ENCODE measurements at regions of chr17 and their contacts with region 1.

Region 1: GRCh38 chr17:47970704-47971463 is at the start of gene CDK5RAP3:
- DNase-seq: peak; percentile 97 to 98 (median 98)
- H3K4me3 ChIP-seq: peak within 1 kb of the TSS; percentile 74
- H3K4me3 Mint-ChIP-seq: peak within 1 kb of the TSS; percentile 98 to 100 (median 99)
- H3K27ac ChIP-seq: peak within 1 kb of the TSS; percentile 73
- H3K27ac Mint-ChIP-seq: peak within 1 kb of the TSS; percentile 90 to 99 (median 94)
- H3K4me1 ChIP-seq: peaks cover 14% of the 10 kb centered on the region
- H3K4me1 Mint-ChIP-seq: peaks cover 26 to 37% (median 33%) of the 10 kb centered on the region in 3 donors
- H3K27me3 ChIP-seq: no peaks in the 10 kb centered on the region
- H3K27me3 Mint-ChIP-seq: peaks cover 0 to 1% of the 10 kb centered on the region in 2 donors
- total RNA-seq, gene CDK5RAP3: 178 to 184 TPM

Region 2: DNA sequence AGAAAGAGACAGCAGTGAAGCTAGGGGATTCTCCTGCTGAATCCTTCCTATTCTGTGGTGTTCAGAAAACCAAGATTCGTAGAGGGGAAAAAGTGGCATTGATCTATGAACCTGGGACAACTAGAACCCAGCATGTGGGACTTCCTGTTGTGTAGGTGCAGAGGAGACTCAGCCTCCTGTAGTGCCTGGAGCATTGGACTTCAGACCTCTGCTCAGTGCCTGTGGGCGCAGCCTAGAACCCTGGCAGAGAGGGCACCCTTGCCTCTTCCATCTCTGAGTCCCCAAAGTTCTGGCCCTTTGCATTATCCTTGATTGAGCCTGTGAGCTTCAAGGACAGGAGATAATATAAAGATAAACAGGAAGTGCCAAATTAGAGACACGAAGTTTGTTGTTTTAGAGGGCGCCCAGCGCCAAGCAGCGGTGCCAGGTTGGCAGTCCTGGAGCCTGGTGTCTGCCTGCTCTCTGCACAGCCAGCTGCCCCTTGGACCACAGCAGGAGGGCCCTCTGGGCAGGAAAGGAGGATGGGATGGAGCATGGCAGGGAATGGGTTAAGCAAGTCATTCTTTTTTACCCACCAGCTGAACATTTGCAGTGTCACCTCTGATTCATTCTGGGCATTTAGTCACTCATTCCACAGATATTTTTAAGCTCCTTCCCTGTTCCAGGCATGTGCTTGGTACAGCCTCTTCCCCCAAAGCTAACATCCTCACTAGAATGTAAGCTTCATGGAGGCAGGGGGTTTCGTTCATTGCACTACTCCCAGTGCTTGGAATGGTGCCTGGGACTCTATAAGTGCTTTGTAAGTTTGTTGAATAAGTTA is 108.1 kb before region 1 on chr17:
- CTCF ChIA-PET with region 1: no interaction called
- POLR2A ChIA-PET with region 1: no interaction called
- DNase-seq: no peak
- H3K4me3 ChIP-seq: no peak overlapping the region
- H3K4me3 Mint-ChIP-seq: no peak overlapping the region
- H3K27ac ChIP-seq: no peak overlapping the region
- H3K27ac Mint-ChIP-seq: no peak overlapping the region
- H3K4me1 ChIP-seq: peaks cover 17% of the 10 kb centered on the region
- H3K4me1 Mint-ChIP-seq: peaks cover 0 to 3% (median 0%) of the 10 kb centered on the region in 3 donors
- H3K27me3 ChIP-seq: no peaks in the 10 kb centered on the region
- H3K27me3 Mint-ChIP-seq: peaks cover 11 to 33% of the 10 kb centered on the region in 2 donors

Region 3: DNA sequence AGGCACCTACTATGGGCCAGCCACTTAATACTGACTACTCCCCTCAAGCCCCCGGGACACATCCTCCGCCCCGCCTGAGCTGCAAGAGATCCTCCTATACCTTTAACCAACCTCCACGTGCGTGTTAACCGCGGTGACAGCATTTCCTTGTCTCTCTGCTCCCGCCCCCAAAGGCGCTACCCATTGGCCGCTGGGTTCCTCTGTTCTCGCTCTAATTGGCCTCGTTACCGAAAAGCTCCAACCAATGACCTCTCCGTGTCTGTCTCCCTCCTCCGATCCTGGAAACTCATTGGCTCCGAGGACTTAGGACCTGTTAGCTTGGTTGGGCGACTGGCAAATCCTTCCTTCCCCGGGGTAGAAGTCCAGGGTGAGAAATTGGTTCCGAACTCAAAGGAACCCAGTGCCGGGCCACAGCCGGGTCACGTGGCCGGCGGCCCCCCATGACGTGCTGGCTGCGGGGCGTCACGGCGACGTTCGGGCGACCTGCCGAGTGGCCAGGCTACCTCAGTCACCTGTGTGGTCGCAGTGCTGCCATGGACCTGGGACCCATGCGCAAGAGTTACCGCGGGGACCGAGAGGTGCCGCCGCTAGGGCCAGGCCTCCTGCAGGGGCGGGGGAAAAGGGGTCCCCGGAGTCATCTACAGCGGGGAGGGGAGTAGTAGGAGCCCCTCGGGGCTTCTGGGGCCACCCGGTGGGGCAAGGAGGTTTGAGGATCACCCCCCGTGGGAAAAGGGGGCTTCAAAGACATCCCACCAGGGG is 29.5 kb before region 1 on chr17 and contains the start of gene PNPO:
- CTCF ChIA-PET with region 1: interaction called, 191 read pairs
- POLR2A ChIA-PET with region 1: interaction called, 14 read pairs
- DNase-seq: peak; percentile 88 to 96 (median 93)
- H3K4me3 ChIP-seq: peak within 1 kb of the TSS; percentile 88
- H3K4me3 Mint-ChIP-seq: peak within 1 kb of the TSS; percentile 59 to 91 (median 86)
- H3K27ac ChIP-seq: peak within 1 kb of the TSS; percentile 81
- H3K27ac Mint-ChIP-seq: peak within 1 kb of the TSS; percentile 53 to 96 (median 92)
- H3K4me1 ChIP-seq: peaks cover 43% of the 10 kb centered on the region
- H3K4me1 Mint-ChIP-seq: peaks cover 33 to 57% (median 49%) of the 10 kb centered on the region in 3 donors
- H3K27me3 ChIP-seq: no peaks in the 10 kb centered on the region
- H3K27me3 Mint-ChIP-seq: no peaks in the 10 kb centered on the region
- total RNA-seq, gene PNPO: 55.5 to 57.7 TPM

Region 4: GRCh38 chr17:47949136-47949759 is 21.6 kb before region 1 on chr17:
- CTCF ChIA-PET with region 1: interaction called, 191 read pairs
- POLR2A ChIA-PET with region 1: interaction called, 4 read pairs
- DNase-seq: peak; percentile 60 to 85 (median 75)
- H3K4me3 ChIP-seq: peak overlapping the region; percentile 61
- H3K4me3 Mint-ChIP-seq: peak overlapping the region in 6 of 7 donors; percentile 68 to 88 (median 74)
- H3K27ac ChIP-seq: no peak overlapping the region
- H3K27ac Mint-ChIP-seq: peak overlapping the region; percentile 25 to 88 (median 73)
- H3K4me1 ChIP-seq: peaks cover 46% of the 10 kb centered on the region
- H3K4me1 Mint-ChIP-seq: peaks cover 32 to 42% (median 34%) of the 10 kb centered on the region in 3 donors
- H3K27me3 ChIP-seq: no peaks in the 10 kb centered on the region
- H3K27me3 Mint-ChIP-seq: no peaks in the 10 kb centered on the region